ENCODE measurements at regions of chr6 and their contacts with region 1.

Region 1: GRCh38 chr6:33391278-33391921 is at the start of gene KIFC1:
- DNase-seq: peak; percentile 100
- H3K4me3 ChIP-seq: peak within 1 kb of the TSS; percentile 56 to 69 (median 58)
- H3K27ac ChIP-seq: peak within 1 kb of the TSS; percentile 87 to 92 (median 90)
- H3K4me1 ChIP-seq: peaks cover 8 to 15% (median 14%) of the 10 kb centered on the region in 4 donors
- H3K27me3 ChIP-seq: no peaks in the 10 kb centered on the region
- CTCF ChIP-seq: peak; percentile 97 to 99 (median 98)
- EP300 ChIP-seq: peak; percentile 12
- POLR2A ChIP-seq: no peak
- total RNA-seq, gene KIFC1: 0.39 to 1.1 (median 0.42) TPM in 3 of 4 donors, not detected in the other

Region 2: GRCh38 chr6:33425668-33426577 is 34.5 kb after region 1 on chr6:
- intact Hi-C with region 1: loop called (anchors 5 kb)
- DNase-seq: peak; percentile 96
- H3K4me3 ChIP-seq: peak overlapping the region; percentile 62 to 75 (median 66)
- H3K27ac ChIP-seq: peak overlapping the region; percentile 89 to 95 (median 94)
- H3K4me1 ChIP-seq: peaks cover 44 to 75% (median 69%) of the 10 kb centered on the region in 4 donors
- H3K27me3 ChIP-seq: no peaks in the 10 kb centered on the region
- CTCF ChIP-seq: peak; percentile 64 to 74 (median 71)
- EP300 ChIP-seq: no peak
- POLR2A ChIP-seq: no peak

Region 3: DNA sequence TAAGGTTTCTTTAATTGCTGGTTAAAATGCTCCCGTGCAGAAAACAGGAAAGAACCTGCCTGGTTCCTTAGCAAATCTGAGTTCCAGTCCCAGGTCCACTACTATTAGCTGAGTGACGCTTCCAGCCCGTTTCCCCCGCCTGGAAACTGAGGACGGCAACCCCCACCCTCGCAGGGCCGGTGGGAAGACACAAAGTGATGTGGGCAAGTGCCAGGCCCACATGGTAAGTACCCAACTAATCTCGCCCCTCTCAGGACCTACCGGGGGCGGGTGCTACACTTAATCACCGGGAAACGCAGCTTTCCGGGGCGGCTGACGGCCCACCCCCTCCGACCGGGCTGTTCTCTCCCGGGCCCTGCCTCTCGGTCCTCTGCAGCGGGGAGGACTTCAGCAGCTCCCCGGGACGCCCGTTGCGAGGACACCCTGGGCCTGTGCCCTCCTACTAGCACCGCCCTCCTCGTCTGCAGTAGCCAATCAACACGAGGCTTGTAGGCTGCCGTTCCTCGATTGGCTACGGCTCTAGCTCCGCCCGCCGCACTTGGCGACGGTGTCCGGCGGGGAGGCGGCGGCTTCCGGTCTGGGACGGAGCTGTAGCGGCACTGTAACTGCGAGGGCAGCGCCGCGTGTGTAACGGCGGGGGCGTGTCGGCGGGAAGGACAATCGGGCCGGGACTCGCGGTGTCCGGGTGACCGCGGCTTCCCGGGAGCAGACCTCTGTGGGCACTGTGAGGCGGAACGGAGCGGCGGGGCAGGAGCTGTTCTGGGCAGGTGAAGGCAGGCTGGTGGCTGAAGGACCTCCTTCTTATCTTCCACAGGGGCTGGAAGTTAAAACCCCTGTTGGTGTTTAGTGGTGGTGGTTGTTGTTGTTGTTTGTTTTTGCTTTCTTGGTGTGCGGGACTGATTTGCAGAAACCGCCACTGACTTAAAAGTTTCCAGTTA is 62.9 kb after region 1 on chr6 and contains the start of gene ZBTB9:
- intact Hi-C with region 1: loop called (anchors 10 kb)
- DNase-seq: peak; percentile 99
- H3K4me3 ChIP-seq: peak within 1 kb of the TSS; percentile 79 to 97 (median 86)
- H3K27ac ChIP-seq: peak within 1 kb of the TSS; percentile 80 to 88 (median 84)
- H3K4me1 ChIP-seq: peaks cover 17 to 35% (median 26%) of the 10 kb centered on the region in 4 donors
- H3K27me3 ChIP-seq: no peaks in the 10 kb centered on the region
- CTCF ChIP-seq: peak in 1 of 3 experiments; percentile 14
- EP300 ChIP-seq: no peak
- POLR2A ChIP-seq: peak; percentile 60
- total RNA-seq, gene ZBTB9: 1.7 to 3.5 (median 3.0) TPM

Region 4: DNA sequence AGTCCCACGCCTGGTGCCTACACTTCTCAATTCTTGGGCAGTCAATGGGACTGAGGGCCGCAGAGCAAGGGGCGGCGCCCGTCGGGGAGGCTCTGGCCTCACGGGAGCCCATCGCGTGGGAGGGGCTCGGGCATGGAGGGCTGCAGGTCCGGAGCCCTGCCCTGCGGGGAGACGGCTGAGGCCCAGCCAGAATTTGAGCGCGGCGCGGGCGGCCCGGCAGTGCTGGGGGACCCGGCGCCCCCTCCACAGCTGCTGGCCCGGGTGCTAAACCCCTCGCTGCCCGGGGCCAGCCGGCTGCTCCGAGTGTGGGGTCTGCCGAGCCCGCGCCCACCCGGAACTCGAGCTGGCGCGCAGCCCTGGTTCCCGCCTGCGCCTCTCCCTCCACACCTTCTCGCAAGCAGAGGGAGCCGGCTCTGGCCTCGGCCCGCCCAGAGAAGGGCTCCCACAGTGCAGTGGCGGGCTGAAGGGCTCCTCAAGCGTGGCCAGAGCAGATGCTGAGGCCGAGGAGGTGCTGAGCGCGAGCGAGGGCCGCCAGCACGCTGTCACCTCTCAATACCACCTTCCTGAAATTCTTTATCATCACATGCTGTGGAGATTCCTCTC is 130.2 kb after region 1 on chr6:
- intact Hi-C with region 1: no loop called
- DNase-seq: no peak
- H3K4me3 ChIP-seq: no peak overlapping the region
- H3K27ac ChIP-seq: no peak overlapping the region
- H3K4me1 ChIP-seq: no peaks in the 10 kb centered on the region
- H3K27me3 ChIP-seq: peaks cover 0 to 9% (median 0%) of the 10 kb centered on the region in 4 donors
- CTCF ChIP-seq: no peak
- EP300 ChIP-seq: no peak
- POLR2A ChIP-seq: no peak

Region 5: GRCh38 chr6:33579828-33580714 is 188.7 kb after region 1 on chr6 and contains the start of gene BAK1:
- intact Hi-C with region 1: loop called (anchors 10 kb)
- DNase-seq: peak; percentile 98
- H3K4me3 ChIP-seq: peak within 1 kb of the TSS; percentile 83 to 94 (median 89)
- H3K27ac ChIP-seq: peak within 1 kb of the TSS; percentile 86 to 91 (median 88)
- H3K4me1 ChIP-seq: peaks cover 30 to 46% (median 38%) of the 10 kb centered on the region in 4 donors
- H3K27me3 ChIP-seq: no peaks in the 10 kb centered on the region
- CTCF ChIP-seq: peak; percentile 27 to 58 (median 36)
- EP300 ChIP-seq: no peak
- POLR2A ChIP-seq: peak; percentile 50
- total RNA-seq, gene BAK1: 9.9 to 13.1 (median 11.7) TPM